ENCODE measurements at regions of chr10 and their contacts with region 1.

Region 1: GRCh38 chr10:88114368-88114767 is 250.9 kb downstream of the PTEN start:
- DNase-seq: peak; percentile 25
- ATAC-seq: no peak
- H3K4me3 Mint-ChIP-seq: no peak overlapping the region
- H3K27ac Mint-ChIP-seq: no peak overlapping the region
- H3K4me1 Mint-ChIP-seq: peaks cover 16% of the 10 kb centered on the region
- H3K27me3 Mint-ChIP-seq: peaks cover 4% of the 10 kb centered on the region
- CTCF ChIP-seq: peak; percentile 68

Region 2: DNA sequence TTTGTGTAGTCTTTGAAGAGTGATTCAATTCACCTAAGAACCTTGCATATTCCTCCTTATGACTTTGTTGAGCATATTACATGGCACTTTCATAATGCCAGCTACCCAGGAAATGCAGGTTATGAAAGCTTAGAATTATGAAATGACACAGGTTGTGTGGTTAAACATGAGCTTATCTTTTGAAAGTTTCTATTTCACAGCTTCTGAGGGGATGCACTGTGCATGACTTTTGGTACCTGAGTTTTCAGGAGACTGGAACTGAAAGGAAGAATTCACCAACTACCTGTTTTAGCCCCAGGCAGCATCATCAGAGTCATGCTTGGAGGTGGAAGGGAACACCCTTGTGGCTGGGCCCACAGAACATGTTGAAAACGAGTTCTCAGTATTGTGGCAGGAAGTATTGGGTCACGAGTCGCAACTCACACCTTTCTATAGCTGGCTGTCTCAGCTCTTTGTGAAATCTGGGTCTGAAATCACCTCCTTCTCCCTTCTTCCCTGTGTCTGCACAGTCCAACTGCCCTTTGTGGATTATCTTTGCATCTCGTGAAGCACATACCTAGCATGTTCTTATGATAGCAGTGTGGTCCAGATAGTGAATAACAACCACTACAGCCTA is 22.8 kb before region 1 on chr10:
- CTCF ChIA-PET with region 1: interaction called, 10 read pairs
- POLR2A ChIA-PET with region 1: interaction called, 19 read pairs
- intact Hi-C with region 1: no loop called
- DNase-seq: peak; percentile 90
- ATAC-seq: peak; percentile 97
- H3K4me3 Mint-ChIP-seq: no peak overlapping the region
- H3K27ac Mint-ChIP-seq: peak overlapping the region; percentile 36
- H3K4me1 Mint-ChIP-seq: peaks cover 36% of the 10 kb centered on the region
- H3K27me3 Mint-ChIP-seq: peaks cover 14% of the 10 kb centered on the region
- CTCF ChIP-seq: no peak

Region 3: GRCh38 chr10:88270871-88271713 is 156.7 kb after region 1 on chr10:
- CTCF ChIA-PET with region 1: no interaction called
- POLR2A ChIA-PET with region 1: no interaction called
- intact Hi-C with region 1: loop called (anchors 2 kb)
- DNase-seq: peak; percentile 79
- ATAC-seq: peak; percentile 91
- H3K4me3 Mint-ChIP-seq: peak overlapping the region; percentile 53
- H3K27ac Mint-ChIP-seq: peak overlapping the region; percentile 90
- H3K4me1 Mint-ChIP-seq: peaks cover 46% of the 10 kb centered on the region
- H3K27me3 Mint-ChIP-seq: peaks cover 5% of the 10 kb centered on the region
- CTCF ChIP-seq: no peak

Region 4: GRCh38 chr10:88553116-88553752 is 438.9 kb after region 1 on chr10:
- CTCF ChIA-PET with region 1: no interaction called
- POLR2A ChIA-PET with region 1: no interaction called
- intact Hi-C with region 1: loop called (anchors 10 kb)
- DNase-seq: peak; percentile 58
- ATAC-seq: peak; percentile 93
- H3K4me3 Mint-ChIP-seq: no peak overlapping the region
- H3K27ac Mint-ChIP-seq: no peak overlapping the region
- H3K4me1 Mint-ChIP-seq: peaks cover 4% of the 10 kb centered on the region
- H3K27me3 Mint-ChIP-seq: no peaks in the 10 kb centered on the region
- CTCF ChIP-seq: peak; percentile 54

Measured in activated CD8-positive, alpha-beta T cell treated with anti-CD3 and anti-CD28 coated beads for 36 hours (primary cell).